ENCODE measurements at regions of chr13 and their contacts with region 1.

Region 1: GRCh38 chr13:25114220-25114619 is 18.3 kb downstream of the PABPC3 start:
- DNase-seq: peak; percentile 59
- ATAC-seq: peak; percentile 99
- H3K4me3 ChIP-seq: no peak overlapping the region
- H3K27ac ChIP-seq: no peak overlapping the region
- H3K4me1 ChIP-seq: no peaks in the 10 kb centered on the region
- H3K27me3 ChIP-seq: no peaks in the 10 kb centered on the region
- CTCF ChIP-seq: peak; percentile 61 to 95 (median 93); a peak in 5 of 6 replicates
- POLR2A ChIP-seq: no peak
- RAD21 ChIP-seq: peak; percentile 69

Region 2: DNA sequence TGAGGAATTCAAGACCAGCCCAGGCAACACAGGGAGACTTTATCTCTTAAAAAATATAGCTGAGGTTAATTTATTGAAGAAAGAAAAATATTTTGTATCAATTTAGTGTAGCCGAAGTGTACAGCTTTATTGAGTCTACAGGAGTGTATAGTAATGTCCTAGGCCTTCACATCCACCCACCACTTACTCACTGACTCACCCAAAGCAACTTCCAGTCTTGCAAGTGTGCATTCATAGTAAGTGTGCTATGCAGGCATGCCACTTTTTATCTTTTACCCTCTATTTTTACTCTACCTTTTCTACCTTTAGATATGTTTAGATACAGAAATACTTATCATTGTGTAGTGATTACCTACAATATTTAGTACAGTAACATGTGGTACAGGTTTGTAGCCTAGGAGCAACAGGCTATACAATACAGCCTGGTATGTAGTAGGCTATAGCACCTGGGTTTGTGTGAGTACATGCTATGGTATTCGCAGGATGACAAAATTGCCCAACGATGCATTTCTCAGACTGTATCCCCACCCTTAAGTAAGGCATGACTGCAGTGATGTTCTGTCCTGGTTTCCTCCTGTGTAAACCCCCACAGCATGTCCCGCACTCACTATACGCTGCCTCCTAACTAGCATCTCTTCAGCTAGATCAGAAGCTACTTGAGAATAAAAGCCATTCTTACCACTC is 449.4 kb before region 1 on chr13:
- CTCF ChIA-PET with region 1: no interaction called
- POLR2A ChIA-PET with region 1: no interaction called
- RAD21 ChIA-PET with region 1: no interaction called
- intact Hi-C with region 1: no loop called
- DNase-seq: no peak
- ATAC-seq: peak; percentile 75
- H3K4me3 ChIP-seq: no peak overlapping the region
- H3K27ac ChIP-seq: no peak overlapping the region
- H3K4me1 ChIP-seq: peaks cover 0 to 19% of the 10 kb centered on the region in 2 experiments; a peak in 2 of 4 replicates
- H3K27me3 ChIP-seq: no peaks in the 10 kb centered on the region
- CTCF ChIP-seq: no peak
- POLR2A ChIP-seq: no peak
- RAD21 ChIP-seq: no peak

Region 3: GRCh38 chr13:25085125-25085742 is 29.0 kb before region 1 on chr13:
- CTCF ChIA-PET with region 1: interaction called, 10 read pairs
- POLR2A ChIA-PET with region 1: no interaction called
- RAD21 ChIA-PET with region 1: no interaction called
- intact Hi-C with region 1: loop called (anchors 1 kb)
- DNase-seq: peak; percentile 36
- ATAC-seq: peak; percentile 91
- H3K4me3 ChIP-seq: no peak overlapping the region
- H3K27ac ChIP-seq: no peak overlapping the region
- H3K4me1 ChIP-seq: no peaks in the 10 kb centered on the region
- H3K27me3 ChIP-seq: no peaks in the 10 kb centered on the region
- CTCF ChIP-seq: peak; percentile 31 to 78 (median 73); a peak in 5 of 6 replicates
- POLR2A ChIP-seq: no peak
- RAD21 ChIP-seq: peak; percentile 57